Calu3 (cell line): ENCODE measurements at regions of chr16 and their contacts with region 1.

Region 1: DNA sequence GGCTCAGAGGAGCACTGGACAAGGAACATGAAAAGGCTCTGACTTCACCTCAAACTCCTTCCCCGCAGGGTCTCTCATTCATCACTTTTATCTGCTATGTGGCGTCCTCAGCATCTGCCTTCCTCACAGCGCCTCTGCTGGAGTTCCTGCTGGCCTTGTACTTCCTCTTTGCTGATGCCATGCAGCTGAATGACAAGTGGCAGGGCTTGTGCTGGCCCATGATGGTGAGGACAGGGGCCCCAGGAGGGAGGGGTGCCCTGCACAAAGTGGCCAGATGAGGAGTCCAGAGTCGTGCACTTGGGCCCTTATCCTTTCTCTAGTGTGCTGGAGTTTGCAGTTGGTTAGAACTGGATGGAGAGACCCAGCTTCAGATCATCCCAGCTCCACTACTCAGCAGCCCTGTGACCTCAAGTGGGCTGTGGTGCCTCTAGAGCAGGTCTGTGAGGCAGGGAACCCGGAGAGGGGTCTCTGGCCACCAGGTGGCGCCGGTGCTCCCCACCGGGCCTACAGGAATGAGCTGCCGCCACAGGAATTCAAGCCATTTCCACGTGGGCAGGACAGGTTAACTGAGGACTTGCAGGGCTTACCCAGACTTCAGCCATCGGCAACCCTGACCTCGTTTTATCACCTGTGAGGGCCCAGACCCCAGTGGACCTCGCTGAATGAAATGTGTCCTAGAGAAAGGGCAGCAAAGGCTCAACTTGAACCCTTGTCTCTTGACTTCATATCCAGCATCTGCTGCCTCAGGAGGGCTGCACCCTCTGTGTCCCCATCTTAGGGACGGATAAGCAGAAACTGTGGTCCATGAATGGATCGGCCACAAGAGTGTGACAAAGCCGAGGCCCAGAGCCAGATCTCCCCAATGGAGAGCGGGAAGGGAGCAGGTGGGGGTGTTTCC is 4.0 kb downstream of the CMTM3 start:
- DNase-seq: peak; percentile 97
- H3K4me3 Mint-ChIP-seq: no peak overlapping the region
- H3K27ac Mint-ChIP-seq: no peak overlapping the region
- H3K4me1 Mint-ChIP-seq: peaks cover 29% of the 10 kb centered on the region
- H3K27me3 Mint-ChIP-seq: no peaks in the 10 kb centered on the region
- CTCF ChIP-seq: peak; percentile 95

Region 2: DNA sequence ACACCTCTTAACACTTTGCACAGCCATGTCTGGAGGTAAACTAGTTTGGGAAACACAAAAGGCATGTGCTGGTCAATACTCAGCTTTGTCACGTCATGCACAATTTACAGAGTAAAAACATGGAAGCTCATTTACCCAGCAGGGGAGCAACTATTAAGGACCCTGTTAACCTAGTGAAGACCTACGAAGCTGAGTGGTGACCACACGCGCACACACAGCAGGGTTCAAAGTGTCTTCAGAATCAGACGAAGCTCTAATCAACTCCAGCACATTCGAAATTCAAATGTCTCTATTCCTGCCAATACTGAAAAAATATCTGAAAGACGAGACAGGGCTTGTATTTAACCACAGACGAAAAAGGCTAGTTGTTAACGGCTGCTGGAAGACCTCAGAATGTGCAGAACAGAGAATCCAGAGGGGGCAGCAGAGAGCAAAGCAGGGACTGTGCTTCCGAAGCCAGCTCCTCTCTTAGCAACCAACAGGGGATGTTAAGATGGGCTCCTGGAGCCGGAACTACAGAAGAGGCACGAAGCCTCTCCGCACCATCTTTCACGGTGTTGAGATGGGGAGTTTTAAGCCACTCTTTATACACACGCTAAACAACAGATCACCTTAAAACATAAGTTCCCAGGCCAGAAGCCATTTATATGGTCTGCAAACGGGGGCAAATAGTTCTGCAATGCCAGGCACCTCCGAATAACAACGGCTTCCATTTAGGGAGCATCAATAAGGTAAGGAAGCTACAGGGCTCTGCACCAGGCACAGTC is 42.4 kb after region 1 on chr16:
- CTCF ChIA-PET with region 1: interaction called, 10 read pairs
- intact Hi-C with region 1: no loop called
- DNase-seq: peak; percentile 87
- H3K4me3 Mint-ChIP-seq: no peak overlapping the region
- H3K27ac Mint-ChIP-seq: no peak overlapping the region
- H3K4me1 Mint-ChIP-seq: peaks cover 9% of the 10 kb centered on the region
- H3K27me3 Mint-ChIP-seq: no peaks in the 10 kb centered on the region
- CTCF ChIP-seq: peak; percentile 96

Region 3: GRCh38 chr16:66660422-66661209 is 52.1 kb after region 1 on chr16:
- CTCF ChIA-PET with region 1: interaction called, 9 read pairs
- intact Hi-C with region 1: loop called (anchors 2 kb)
- DNase-seq: peak; percentile 51
- H3K4me3 Mint-ChIP-seq: peak overlapping the region; percentile 3
- H3K27ac Mint-ChIP-seq: no peak overlapping the region
- H3K4me1 Mint-ChIP-seq: peaks cover 10% of the 10 kb centered on the region
- H3K27me3 Mint-ChIP-seq: no peaks in the 10 kb centered on the region
- CTCF ChIP-seq: no peak